CD8-positive, alpha-beta T cell (primary cell): ENCODE measurements at regions of chr16 and their contacts with region 1.

Region 1: GRCh38 chr16:74984535-74985296 is at the start of gene WDR59:
- DNase-seq: peak; percentile 95 to 100 (median 99)
- ATAC-seq: peak; percentile 98
- H3K4me3 ChIP-seq: peak within 1 kb of the TSS; percentile 82 to 99
- H3K4me3 Mint-ChIP-seq: peak within 1 kb of the TSS; percentile 93
- H3K27ac ChIP-seq: peak within 1 kb of the TSS; percentile 66 to 67
- H3K27ac Mint-ChIP-seq: peak within 1 kb of the TSS; percentile 90
- H3K4me1 ChIP-seq: peaks cover 7% of the 10 kb centered on the region
- H3K4me1 Mint-ChIP-seq: peaks cover 23% of the 10 kb centered on the region
- H3K27me3 ChIP-seq: no peaks in the 10 kb centered on the region
- H3K27me3 Mint-ChIP-seq: no peaks in the 10 kb centered on the region
- CTCF ChIP-seq: no peak
- total RNA-seq, gene WDR59: 60.1 to 60.8 TPM

Region 2: DNA sequence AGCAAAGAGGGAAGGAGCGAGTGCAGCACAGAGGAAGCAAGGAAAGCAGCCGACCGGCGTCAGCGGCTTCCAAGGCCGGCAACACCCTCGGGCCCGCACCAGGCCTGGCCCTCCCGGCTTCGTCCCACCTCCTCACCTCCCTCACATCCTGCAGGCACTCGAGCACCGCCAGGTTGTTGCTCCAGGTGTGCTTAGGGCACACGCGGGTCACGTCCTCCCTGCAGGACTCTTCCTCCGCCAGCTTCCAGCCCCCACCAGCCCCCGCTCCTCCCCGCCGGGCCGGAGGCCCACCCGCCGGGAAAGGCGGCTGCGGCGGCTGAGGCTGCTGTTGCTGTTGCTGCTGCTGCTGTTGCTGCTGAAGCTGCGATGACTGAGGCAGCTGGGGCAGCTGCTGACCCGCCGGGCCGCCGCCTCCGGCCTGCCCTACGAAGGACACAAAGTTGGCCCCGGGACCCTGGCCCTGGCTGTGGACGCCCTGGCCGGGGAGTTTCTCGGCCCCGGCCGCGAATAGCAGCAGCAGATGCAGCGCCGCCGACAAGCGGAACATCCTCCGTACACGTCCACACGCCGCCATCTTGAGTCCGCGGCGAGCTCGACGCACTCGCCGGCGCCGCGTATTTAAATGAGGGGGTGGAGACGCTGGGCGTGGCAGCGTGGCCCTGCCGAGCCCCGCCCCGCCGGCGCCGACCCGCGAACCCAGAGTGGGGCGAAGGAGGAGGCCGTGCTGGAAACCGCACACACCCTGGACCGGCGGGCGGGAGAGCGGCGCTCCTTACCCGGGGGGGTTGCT is 378.0 kb before region 1 on chr16 and contains the start of gene GLG1:
- CTCF ChIA-PET with region 1: no interaction called
- POLR2A ChIA-PET with region 1: no interaction called
- intact Hi-C with region 1: loop called in 1 of 2 experiments (anchors 10 kb)
- DNase-seq: peak; percentile 80 to 96 (median 92)
- ATAC-seq: peak; percentile 94
- H3K4me3 ChIP-seq: peak within 1 kb of the TSS; percentile 65 to 80
- H3K4me3 Mint-ChIP-seq: peak within 1 kb of the TSS; percentile 97
- H3K27ac ChIP-seq: peak within 1 kb of the TSS; percentile 90 to 93
- H3K27ac Mint-ChIP-seq: peak within 1 kb of the TSS; percentile 97
- H3K4me1 ChIP-seq: peaks cover 65% of the 10 kb centered on the region
- H3K4me1 Mint-ChIP-seq: peaks cover 64% of the 10 kb centered on the region
- H3K27me3 ChIP-seq: no peaks in the 10 kb centered on the region
- H3K27me3 Mint-ChIP-seq: no peaks in the 10 kb centered on the region
- CTCF ChIP-seq: no peak
- total RNA-seq, gene GLG1: 73.7 to 79.4 TPM

Region 3: DNA sequence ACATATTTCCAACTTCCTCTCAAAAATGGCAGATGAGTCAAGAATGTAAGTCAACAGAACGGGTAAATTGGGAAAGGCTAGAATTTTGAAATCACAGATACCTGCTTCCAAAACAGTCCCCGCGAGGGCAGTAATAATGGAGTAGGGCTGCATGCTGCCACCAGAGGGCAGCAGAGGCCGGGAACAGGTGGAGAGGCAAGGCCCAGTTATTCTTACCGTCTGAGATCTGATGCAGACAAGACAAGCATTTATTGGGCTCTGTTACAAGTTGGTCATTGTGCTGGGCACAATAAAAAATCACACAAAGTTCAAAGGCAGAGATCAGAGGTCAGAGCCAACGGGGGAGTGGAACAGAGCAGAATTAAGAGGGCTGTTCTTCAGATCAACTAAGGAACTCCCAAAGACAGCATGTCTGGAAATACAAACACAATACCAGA is 275.3 kb before region 1 on chr16:
- CTCF ChIA-PET with region 1: no interaction called
- POLR2A ChIA-PET with region 1: no interaction called
- intact Hi-C with region 1: loop called in 1 of 2 experiments (anchors 10 kb)
- DNase-seq: peak; percentile 63 to 89 (median 83)
- ATAC-seq: peak; percentile 100
- H3K4me3 ChIP-seq: no peak overlapping the region
- H3K4me3 Mint-ChIP-seq: no peak overlapping the region
- H3K27ac ChIP-seq: no peak overlapping the region
- H3K27ac Mint-ChIP-seq: no peak overlapping the region
- H3K4me1 ChIP-seq: no peaks in the 10 kb centered on the region
- H3K4me1 Mint-ChIP-seq: peaks cover 2% of the 10 kb centered on the region
- H3K27me3 ChIP-seq: no peaks in the 10 kb centered on the region
- H3K27me3 Mint-ChIP-seq: no peaks in the 10 kb centered on the region
- CTCF ChIP-seq: peak; percentile 97

Region 4: DNA sequence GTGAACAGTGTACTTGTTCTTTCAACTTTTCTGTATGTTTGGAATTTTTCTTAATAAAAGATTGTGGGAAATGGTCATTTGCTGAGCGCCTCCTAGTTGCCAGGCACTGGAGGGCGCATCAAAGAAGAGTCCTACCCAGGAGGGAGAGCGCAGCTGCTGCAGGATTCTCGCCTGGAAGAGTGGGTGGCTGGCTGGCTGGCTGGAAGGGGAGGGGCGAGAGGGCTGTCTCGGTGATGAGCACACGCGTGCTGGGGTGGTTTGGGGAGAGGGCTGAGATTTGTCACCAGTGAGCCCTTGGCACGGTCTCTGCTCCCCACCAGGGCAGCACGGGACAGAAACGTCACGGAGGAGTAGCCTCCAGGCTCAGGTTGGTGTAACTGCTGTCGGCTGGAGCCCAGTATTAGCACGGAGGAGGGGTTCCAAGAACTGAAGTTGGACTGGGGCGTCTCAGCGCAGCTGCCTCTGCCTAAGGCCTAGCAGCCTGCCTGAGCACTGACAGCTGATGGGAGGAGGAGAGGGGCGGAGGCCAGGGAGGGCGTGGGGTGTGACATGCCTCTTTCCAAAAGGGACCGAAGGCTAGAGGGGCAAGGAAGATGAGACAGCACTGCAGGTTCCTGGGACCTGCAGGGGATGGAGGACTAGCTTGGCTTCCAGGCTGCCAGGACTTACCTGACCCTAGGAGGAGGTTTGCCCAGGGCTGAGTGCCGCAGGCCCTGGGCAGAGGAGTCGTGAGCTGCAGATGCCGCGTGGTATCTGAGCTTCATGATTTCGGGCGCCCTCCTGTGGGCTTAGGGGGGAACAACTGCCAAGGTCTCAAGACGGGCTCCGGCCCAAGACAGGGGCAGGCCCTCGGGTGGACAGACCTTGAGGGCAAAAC is 126.2 kb after region 1 on chr16:
- CTCF ChIA-PET with region 1: interaction called, 48 read pairs
- POLR2A ChIA-PET with region 1: no interaction called
- intact Hi-C with region 1: no loop called
- DNase-seq: peak; percentile 65 to 88 (median 81)
- ATAC-seq: peak; percentile 86
- H3K4me3 ChIP-seq: no peak overlapping the region
- H3K4me3 Mint-ChIP-seq: peak overlapping the region; percentile 32
- H3K27ac ChIP-seq: no peak overlapping the region
- H3K27ac Mint-ChIP-seq: no peak overlapping the region
- H3K4me1 ChIP-seq: peaks cover 25% of the 10 kb centered on the region
- H3K4me1 Mint-ChIP-seq: peaks cover 33% of the 10 kb centered on the region
- H3K27me3 ChIP-seq: peaks cover 0 to 6% of the 10 kb centered on the region in 2 experiments
- H3K27me3 Mint-ChIP-seq: peaks cover 9% of the 10 kb centered on the region
- CTCF ChIP-seq: peak; percentile 83

Region 5: DNA sequence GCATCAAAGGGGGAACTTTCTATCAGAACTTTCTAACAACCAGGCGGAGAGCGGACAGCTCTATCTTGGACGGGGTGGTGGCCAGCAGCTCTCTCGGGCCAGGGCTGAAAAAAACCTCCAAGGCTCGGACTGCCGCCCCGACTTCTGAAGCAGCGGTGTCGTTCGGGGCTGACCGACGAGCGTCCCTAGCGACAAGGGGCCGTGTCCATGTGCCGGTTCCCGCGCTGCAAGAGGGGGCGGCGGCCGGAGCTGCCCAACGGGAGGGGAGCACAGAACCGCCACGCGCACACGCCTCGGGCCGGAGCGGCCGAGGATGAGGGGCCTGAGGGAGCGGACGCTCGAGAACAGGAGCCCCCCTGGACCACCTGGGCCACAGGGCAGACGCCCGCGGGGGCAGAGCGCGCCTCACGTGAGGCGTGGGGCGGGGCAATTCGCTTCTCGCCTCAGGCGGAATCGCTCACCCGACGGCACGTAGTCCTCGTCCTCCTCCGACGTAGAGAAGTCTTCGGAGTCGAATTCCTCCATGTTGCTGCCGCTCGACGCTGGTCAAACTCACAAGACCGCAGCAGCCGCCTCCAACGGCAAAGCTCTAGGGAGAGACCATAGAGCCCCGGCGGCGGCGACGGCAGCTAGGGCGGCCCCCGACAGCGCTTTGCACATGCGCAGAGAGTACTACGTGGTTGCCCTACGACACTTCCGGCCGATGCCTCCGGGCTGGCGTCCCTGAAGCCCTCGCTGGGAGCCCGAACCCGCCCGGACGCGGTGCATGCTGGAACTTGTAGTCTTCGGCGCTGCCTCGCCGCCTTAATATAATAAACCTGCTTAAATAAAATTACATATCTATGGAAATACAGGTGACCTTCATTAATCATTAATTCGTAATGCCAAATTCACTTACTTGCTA is 448.4 kb after region 1 on chr16 and contains the start of gene CFDP1:
- CTCF ChIA-PET with region 1: no interaction called
- POLR2A ChIA-PET with region 1: interaction called, 3 read pairs
- intact Hi-C with region 1: loop called (anchors 1 kb)
- DNase-seq: peak; percentile 90 to 98 (median 96)
- ATAC-seq: peak; percentile 81
- H3K4me3 ChIP-seq: peak within 1 kb of the TSS; percentile 87 to 90
- H3K4me3 Mint-ChIP-seq: peak within 1 kb of the TSS; percentile 87
- H3K27ac ChIP-seq: peak within 1 kb of the TSS; percentile 95 to 98
- H3K27ac Mint-ChIP-seq: peak within 1 kb of the TSS; percentile 96
- H3K4me1 ChIP-seq: peaks cover 6% of the 10 kb centered on the region
- H3K4me1 Mint-ChIP-seq: peaks cover 38% of the 10 kb centered on the region
- H3K27me3 ChIP-seq: no peaks in the 10 kb centered on the region
- H3K27me3 Mint-ChIP-seq: no peaks in the 10 kb centered on the region
- CTCF ChIP-seq: no peak
- total RNA-seq, gene CFDP1: 18.6 to 20.3 TPM

Region 6: GRCh38 chr16:75622761-75623605 is 638.3 kb after region 1 on chr16 and contains the start of gene ADAT1:
- CTCF ChIA-PET with region 1: no interaction called
- POLR2A ChIA-PET with region 1: no interaction called
- intact Hi-C with region 1: loop called (anchors 1 to 5 kb)
- DNase-seq: peak; percentile 94 to 100 (median 98)
- ATAC-seq: peak; percentile 85
- H3K4me3 ChIP-seq: peak within 1 kb of the TSS; percentile 90 to 97
- H3K4me3 Mint-ChIP-seq: peak within 1 kb of the TSS; percentile 98
- H3K27ac ChIP-seq: peak within 1 kb of the TSS; percentile 89 to 98
- H3K27ac Mint-ChIP-seq: peak within 1 kb of the TSS; percentile 98
- H3K4me1 ChIP-seq: peaks cover 36% of the 10 kb centered on the region
- H3K4me1 Mint-ChIP-seq: peaks cover 58% of the 10 kb centered on the region
- H3K27me3 ChIP-seq: no peaks in the 10 kb centered on the region
- H3K27me3 Mint-ChIP-seq: no peaks in the 10 kb centered on the region
- CTCF ChIP-seq: no peak
- total RNA-seq, gene ADAT1: 44.4 to 47.6 TPM